ENCODE measurements at regions of chr16 and their contacts with region 1.

Region 1: GRCh38 chr16:57167953-57168352 is 17.9 kb downstream of the PSME3IP1 start:
- DNase-seq: no peak
- H3K4me3 ChIP-seq: no peak overlapping the region
- H3K27ac ChIP-seq: no peak overlapping the region
- H3K4me1 ChIP-seq: no peaks in the 10 kb centered on the region
- H3K27me3 ChIP-seq: no peaks in the 10 kb centered on the region
- CTCF ChIP-seq: peak; percentile 43

Region 2: DNA sequence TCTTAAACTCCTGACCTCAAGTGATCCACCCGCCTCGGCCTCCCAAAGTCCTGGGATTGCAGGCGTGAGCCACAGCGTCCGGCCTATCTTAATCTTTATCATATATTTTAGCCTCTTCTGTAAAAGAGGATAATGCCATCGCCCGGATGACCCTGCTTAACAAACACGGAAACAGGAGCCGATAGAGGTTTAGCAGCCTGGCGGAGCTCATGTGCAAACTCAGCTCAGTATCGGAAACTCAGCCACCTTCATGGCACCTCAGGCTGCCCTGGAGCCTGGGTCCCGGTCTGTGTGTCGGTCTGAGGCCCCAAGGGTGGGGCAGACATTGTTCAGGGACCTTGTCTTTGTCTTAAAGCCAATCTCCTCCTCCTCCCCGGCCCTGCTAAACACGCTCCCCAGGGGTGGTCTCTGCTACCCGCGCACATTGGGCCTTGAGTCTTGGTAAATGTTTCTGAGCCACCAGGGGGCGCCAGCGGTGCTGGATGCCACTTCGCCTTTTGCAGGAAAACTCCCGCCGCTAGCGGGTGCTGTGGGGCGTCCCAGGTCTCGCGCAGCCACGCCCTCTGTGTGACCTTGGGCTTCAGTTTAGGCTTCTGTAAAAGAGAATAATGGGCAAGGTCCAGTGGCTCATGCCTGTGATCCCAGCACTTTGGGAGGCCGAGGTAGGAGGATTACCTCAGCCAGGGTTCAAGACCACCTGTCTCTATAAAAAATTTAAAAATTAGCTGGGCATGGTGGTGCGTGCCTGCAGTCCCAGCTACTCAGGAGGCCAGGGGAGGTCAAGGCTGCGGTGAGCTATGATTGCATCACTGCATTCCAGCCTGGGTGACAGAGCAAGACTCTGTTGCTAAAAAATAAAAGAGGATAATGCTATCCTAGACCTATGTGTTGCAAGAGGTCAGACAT is 203.5 kb before region 1 on chr16:
- intact Hi-C with region 1: loop called (anchors 5 kb)
- DNase-seq: peak; percentile 98
- H3K4me3 ChIP-seq: no peak overlapping the region
- H3K27ac ChIP-seq: no peak overlapping the region
- H3K4me1 ChIP-seq: no peaks in the 10 kb centered on the region
- H3K27me3 ChIP-seq: no peaks in the 10 kb centered on the region
- CTCF ChIP-seq: peak; percentile 95

Region 3: DNA sequence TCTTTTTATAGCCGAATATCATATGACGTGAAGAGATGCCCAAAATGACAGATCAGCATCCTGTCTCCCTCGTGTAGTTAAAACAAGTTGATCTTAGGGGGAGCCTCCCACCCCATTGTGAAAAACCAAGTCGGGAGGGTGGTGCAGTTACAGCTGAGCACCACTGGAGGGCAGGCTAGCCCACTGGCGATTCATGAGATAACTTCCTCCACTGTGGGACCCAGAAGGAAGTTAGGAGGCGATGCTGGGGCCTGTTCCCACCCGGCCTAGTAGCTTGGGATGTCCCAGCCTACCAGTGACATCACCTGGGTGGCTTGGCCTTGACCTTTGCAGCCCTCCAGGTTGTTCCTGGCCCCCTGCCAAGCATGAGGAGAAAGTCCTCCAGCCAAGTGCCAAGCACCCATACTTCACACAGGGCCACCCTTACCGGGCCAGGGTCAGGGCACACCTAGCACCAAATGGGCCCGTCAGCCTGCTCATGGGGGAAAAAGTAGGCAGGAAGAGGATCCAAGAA is 83.6 kb before region 1 on chr16:
- intact Hi-C with region 1: loop called (anchors 2 kb)
- DNase-seq: peak; percentile 74
- H3K4me3 ChIP-seq: no peak overlapping the region
- H3K27ac ChIP-seq: no peak overlapping the region
- H3K4me1 ChIP-seq: no peaks in the 10 kb centered on the region
- H3K27me3 ChIP-seq: no peaks in the 10 kb centered on the region
- CTCF ChIP-seq: peak; percentile 96

Region 4: DNA sequence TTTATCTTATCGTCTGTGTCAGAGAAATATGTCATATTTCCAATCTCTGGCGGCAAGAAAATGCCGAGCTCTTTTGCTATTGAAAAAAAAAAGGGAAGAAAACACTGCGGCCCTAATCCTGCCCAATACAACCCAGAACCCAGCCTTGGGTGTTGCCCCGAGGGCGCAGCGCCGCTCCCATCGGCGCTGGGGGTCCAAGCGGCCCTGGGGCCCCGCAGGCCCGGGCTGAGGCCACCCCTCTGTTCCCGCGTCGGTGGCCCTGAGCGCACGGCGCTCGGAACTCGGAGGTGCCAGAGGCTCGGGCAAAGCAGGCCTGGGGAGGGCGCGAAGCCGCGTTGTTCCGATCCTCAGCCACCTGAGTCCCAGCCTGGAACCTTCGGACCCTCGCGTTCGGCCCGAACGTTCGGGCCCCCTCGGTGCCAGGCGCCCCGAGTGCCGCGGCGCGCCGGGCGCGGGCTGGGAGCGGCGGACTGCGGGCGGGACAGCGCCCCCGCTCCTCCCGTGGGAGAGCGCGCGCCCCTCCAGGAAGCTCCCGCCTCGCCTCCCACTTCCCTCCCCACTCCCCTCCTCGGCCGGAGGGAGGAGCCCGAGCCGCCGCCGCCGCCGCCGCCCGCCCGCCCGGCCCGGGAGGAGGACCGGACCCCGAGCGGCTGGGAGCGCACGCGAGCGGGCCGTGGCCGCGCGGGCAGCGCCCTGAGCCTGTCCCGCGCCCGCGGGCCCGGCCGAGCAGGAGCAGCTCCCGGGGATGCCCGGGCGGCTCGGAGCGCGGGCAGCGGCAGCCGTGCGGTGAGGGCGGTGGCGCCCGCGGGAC is 75.8 kb before region 1 on chr16 and contains the start of gene CPNE2:
- intact Hi-C with region 1: loop called (anchors 2 kb)
- DNase-seq: peak; percentile 66
- H3K4me3 ChIP-seq: peak within 1 kb of the TSS; percentile 86
- H3K27ac ChIP-seq: peak within 1 kb of the TSS; percentile 70
- H3K4me1 ChIP-seq: no peaks in the 10 kb centered on the region
- H3K27me3 ChIP-seq: no peaks in the 10 kb centered on the region
- CTCF ChIP-seq: no peak
- total RNA-seq, gene CPNE2: 38.6 to 53.3 TPM

Measured in colonic mucosa (tissue), 4 donors.